T-cell (primary cell): ENCODE measurements at regions of chr15 and their contacts with region 1.

Region 1: GRCh38 chr15:86591994-86592735 is 512.5 kb downstream of the AGBL1 start:
- DNase-seq: no peak
- ATAC-seq: no peak
- H3K4me3 ChIP-seq: no peak overlapping the region
- H3K4me3 Mint-ChIP-seq: no peak overlapping the region
- H3K27ac ChIP-seq: no peak overlapping the region
- H3K27ac Mint-ChIP-seq: no peak overlapping the region
- H3K4me1 ChIP-seq: no peaks in the 10 kb centered on the region
- H3K4me1 Mint-ChIP-seq: no peaks in the 10 kb centered on the region
- H3K27me3 ChIP-seq: no peaks in the 10 kb centered on the region
- H3K27me3 Mint-ChIP-seq: no peaks in the 10 kb centered on the region

Region 2: DNA sequence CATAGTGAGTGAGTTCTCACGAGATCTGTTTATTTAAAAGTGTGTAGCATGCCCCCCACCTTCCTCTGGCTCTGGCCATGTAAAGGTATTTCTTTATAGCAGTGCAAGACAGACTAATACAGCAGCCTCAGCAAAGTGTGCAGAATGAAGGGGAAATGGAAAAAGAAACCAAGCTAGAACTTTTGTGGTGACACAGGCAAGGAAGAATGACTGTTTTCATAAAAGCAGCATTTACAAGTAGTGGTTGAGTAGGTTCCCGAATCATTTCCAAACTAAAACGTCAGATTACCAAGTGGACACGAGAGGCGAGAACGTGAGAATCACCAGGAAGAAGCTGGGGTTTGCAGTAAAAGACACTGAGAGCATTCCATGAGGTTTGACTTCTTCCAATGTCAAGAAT is 1312.0 kb before region 1 on chr15:
- CTCF ChIA-PET with region 1: no interaction called
- POLR2A ChIA-PET with region 1: interaction called in 1 of 2 experiments, 13 read pairs
- DNase-seq: no peak
- ATAC-seq: no peak
- H3K4me3 ChIP-seq: no peak overlapping the region
- H3K4me3 Mint-ChIP-seq: no peak overlapping the region
- H3K27ac ChIP-seq: no peak overlapping the region
- H3K27ac Mint-ChIP-seq: no peak overlapping the region
- H3K4me1 ChIP-seq: no peaks in the 10 kb centered on the region
- H3K4me1 Mint-ChIP-seq: no peaks in the 10 kb centered on the region
- H3K27me3 ChIP-seq: peaks cover 0 to 2% of the 10 kb centered on the region in 2 experiments
- H3K27me3 Mint-ChIP-seq: peaks cover 0 to 1% of the 10 kb centered on the region in 2 donors